Activated naive CD4-positive, alpha-beta T cell treated with anti-CD3 and anti-CD28 coated beads for 36 hours (primary cell): ENCODE measurements at regions of chr22 and their contacts with region 1.

Region 1: GRCh38 chr22:30485362-30485988 is 13.7 kb upstream of the SEC14L3 start:
- DNase-seq: peak; percentile 81
- H3K4me3 Mint-ChIP-seq: no peak overlapping the region
- H3K27ac Mint-ChIP-seq: no peak overlapping the region
- H3K4me1 Mint-ChIP-seq: no peaks in the 10 kb centered on the region
- H3K27me3 Mint-ChIP-seq: no peaks in the 10 kb centered on the region

Region 2: DNA sequence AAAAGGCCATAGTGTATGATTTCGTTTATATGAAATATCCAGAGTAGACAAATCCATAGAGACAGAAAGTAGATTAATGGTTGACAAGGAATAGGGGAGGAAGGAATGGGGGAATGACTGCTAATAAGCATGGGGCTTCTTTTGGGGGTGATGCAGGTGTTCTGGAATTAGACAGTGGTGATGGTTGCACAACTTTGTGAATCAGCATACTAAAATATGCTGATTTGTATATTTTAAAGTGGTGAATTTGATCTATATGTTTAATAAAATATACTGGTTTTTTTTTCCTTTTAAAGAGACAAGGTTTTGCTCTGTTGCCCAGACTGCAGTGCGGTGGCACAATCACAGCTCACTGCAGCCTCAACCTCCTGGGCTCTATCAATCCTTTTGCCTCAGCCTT is 411.7 kb before region 1 on chr22:
- CTCF ChIA-PET with region 1: no interaction called
- intact Hi-C with region 1: no loop called
- DNase-seq: no peak
- H3K4me3 Mint-ChIP-seq: no peak overlapping the region
- H3K27ac Mint-ChIP-seq: no peak overlapping the region
- H3K4me1 Mint-ChIP-seq: peaks cover 10% of the 10 kb centered on the region
- H3K27me3 Mint-ChIP-seq: peaks cover 5% of the 10 kb centered on the region

Region 3: DNA sequence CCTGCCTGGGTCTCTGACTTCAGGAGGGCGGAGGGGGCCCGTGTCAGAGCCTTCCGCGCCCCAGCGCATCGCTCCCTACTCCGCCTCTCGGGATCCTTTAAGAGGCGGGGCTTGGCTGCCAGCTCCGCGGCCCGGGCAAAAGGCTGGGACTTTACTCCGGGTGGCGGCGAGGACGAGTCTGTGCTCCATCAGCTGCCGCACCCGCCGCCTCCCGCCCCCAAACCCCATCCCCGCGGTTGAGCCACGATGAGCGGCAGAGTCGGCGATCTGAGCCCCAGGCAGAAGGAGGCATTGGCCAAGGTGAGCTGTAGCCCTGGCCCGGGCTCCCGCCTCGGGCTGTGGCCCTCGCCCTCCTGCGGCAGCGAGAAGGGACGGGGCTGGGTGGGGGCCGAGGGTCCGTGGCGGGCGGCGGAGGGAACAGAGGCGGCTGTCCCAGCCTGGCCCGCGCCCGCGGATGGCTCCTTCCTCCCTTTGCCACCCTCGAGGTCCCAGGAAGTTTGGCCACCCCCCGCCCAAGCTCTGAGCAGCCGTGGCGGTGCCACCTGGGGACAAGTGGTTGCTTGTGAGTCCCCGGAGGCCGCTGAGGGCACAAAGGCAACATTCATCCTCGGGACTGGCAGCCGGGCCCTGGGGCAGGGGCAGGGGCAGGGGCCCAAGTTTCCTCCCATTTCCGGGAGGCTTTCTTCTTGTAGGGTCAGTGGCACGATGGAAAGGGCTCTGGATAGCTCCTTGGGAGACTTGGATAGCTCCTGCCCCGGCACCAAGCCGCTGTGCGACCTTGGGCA is 88.4 kb before region 1 on chr22 and contains the start of gene SEC14L2:
- CTCF ChIA-PET with region 1: interaction called, 73 read pairs
- intact Hi-C with region 1: no loop called
- DNase-seq: peak; percentile 73
- H3K4me3 Mint-ChIP-seq: peak within 1 kb of the TSS; percentile 87
- H3K27ac Mint-ChIP-seq: no peak within 1 kb of the TSS
- H3K4me1 Mint-ChIP-seq: peaks cover 43% of the 10 kb centered on the region
- H3K27me3 Mint-ChIP-seq: no peaks in the 10 kb centered on the region
- total RNA-seq, gene SEC14L2: 8.2 to 8.8 TPM

Region 4: GRCh38 chr22:30444632-30445437 is 40.6 kb before region 1 on chr22:
- CTCF ChIA-PET with region 1: interaction called, 31 read pairs
- intact Hi-C with region 1: loop called (anchors 1 kb)
- DNase-seq: peak; percentile 75
- H3K4me3 Mint-ChIP-seq: no peak overlapping the region
- H3K27ac Mint-ChIP-seq: no peak overlapping the region
- H3K4me1 Mint-ChIP-seq: peaks cover 10% of the 10 kb centered on the region
- H3K27me3 Mint-ChIP-seq: peaks cover 24% of the 10 kb centered on the region

Region 5: DNA sequence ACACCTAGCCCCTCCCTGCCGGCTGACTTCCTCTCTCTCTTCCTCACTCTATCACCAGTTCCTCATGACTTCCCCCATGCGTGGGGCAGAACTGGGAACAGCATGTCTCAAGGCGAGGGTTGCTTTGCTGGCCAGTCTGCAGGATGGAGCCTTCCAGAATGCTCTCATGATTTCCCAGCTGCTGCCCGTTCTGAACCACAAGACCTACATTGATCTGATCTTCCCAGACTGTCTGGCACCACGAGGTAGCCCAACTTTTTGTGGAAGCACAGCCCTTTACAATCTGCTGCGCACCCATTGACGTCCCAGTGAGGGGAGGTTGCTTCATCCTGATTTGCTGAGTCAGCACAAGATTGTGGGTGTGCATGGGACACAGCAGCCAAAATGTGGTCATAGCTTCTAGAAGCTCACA is 130.1 kb after region 1 on chr22:
- CTCF ChIA-PET with region 1: no interaction called
- intact Hi-C with region 1: no loop called
- DNase-seq: no peak
- H3K4me3 Mint-ChIP-seq: no peak overlapping the region
- H3K27ac Mint-ChIP-seq: no peak overlapping the region
- H3K4me1 Mint-ChIP-seq: no peaks in the 10 kb centered on the region
- H3K27me3 Mint-ChIP-seq: no peaks in the 10 kb centered on the region